ENCODE measurements at regions of chr6 and their contacts with region 1.

Region 1: DNA sequence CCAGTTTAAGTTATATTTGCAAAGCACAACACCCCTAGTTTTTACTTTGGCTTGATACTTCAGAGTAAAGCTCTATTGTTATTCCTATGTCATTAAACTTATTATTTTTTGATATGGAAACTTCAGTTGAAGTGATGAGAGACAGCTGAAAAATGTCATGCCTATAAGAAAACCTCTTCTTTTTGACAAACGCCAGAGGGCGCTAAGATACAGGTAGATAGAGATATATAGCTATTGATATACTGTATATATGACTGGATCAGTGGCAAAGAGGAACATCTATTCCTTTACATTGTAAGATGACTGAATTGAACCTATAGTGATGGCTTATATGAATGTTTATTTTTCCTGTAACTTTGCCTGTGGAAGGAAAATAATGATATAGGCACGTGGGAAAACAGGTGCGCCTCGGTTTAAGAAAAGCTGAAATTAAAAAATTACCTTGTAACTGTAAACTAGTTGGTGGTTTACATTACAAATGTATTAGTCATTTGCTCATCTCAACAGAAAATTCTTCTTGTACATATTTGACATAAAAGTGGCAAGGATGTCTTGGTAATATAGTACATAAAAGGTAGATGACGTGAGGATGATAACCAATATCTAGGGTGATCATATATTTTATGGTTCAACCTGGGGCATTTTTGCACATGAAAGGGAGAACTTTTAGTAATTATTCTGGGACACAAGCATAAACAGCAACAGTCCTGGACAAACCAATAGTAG is 74.1 kb downstream of the LAMA4 start:
- DNase-seq: peak; percentile 26 to 79
- H3K4me3 ChIP-seq: no peak overlapping the region
- H3K27ac ChIP-seq: peak overlapping the region; percentile 26
- H3K4me1 ChIP-seq: peaks cover 14% of the 10 kb centered on the region
- H3K27me3 ChIP-seq: no peaks in the 10 kb centered on the region
- CTCF ChIP-seq: peak; percentile 99

Region 2: GRCh38 chr6:112282221-112282620 is 102.0 kb after region 1 on chr6:
- CTCF ChIA-PET with region 1: interaction called, 10 read pairs
- POLR2A ChIA-PET with region 1: no interaction called
- intact Hi-C with region 1: no loop called
- DNase-seq: peak; percentile 39 to 87
- H3K4me3 ChIP-seq: no peak overlapping the region
- H3K27ac ChIP-seq: peak overlapping the region; percentile 57
- H3K4me1 ChIP-seq: peaks cover 44% of the 10 kb centered on the region
- H3K27me3 ChIP-seq: no peaks in the 10 kb centered on the region
- CTCF ChIP-seq: peak; percentile 47; the same call in 1 of the 2 replicates

Region 3: DNA sequence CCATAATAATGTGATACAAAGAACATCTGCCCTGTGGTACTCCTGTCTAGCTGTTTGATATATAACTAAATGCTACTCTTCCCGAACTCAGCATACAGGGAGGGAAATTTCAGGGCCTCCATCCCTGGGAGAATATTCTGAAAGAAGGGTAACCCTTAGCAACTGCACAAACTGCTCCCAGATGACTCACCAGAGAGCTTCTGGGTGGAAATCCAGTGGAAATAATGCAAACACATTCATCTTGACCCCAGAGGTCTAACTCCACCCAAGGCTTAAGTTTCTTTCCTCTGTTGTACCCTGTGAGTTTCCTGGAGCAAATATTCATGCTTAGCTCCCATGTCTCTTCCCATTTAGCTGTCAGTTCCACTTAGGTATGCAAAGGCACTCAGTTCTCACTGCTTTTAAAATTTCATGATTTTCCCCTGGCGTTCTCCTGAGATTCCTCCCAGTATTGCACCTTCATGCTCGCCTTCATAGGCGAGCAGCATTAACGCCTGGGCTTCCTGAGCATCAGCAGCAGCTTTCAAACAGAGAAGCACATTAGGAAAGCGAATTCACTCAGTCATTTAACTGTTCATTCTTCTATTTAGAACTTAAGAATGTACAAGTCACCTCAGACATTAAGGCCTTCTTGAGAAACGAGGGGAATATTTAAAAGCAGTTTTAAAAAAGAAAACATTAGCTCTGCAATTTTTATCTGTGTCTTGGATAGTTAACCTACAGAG is 117.9 kb after region 1 on chr6:
- CTCF ChIA-PET with region 1: interaction called, 5 read pairs
- POLR2A ChIA-PET with region 1: interaction called, 4 read pairs
- intact Hi-C with region 1: loop called (anchors 1 kb)
- DNase-seq: peak; percentile 48 to 98
- H3K4me3 ChIP-seq: peak overlapping the region; percentile 58
- H3K27ac ChIP-seq: peak overlapping the region; percentile 99
- H3K4me1 ChIP-seq: peaks cover 68% of the 10 kb centered on the region
- H3K27me3 ChIP-seq: no peaks in the 10 kb centered on the region
- CTCF ChIP-seq: peak; percentile 49

Region 4: DNA sequence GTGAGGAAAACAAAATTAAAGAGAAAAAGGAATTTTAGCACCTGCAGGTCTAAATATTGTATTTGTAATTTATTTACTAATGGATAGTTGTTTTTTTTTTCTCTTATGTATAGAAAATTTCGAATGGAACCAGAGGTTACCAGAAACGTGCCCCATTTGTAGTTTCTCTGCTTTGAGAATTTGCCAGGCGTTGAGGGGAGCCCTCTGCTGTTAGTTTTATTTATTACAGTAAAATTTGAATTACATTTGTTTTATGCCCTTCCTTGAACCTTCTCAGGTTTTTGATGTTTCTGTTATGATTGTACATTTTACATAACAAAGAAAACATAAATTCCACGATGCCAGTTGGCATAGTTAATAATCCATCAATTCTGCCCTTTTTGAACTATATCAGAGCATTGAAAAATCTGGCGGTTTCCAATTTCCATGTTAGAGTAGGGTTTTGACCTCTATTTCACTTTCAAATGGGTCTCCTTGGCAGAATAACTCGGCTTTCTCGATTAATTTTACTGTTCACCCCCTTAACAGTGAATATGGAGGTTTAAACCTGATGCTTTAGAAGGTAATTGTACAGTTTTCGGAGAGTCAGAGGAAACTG is 131.8 kb after region 1 on chr6:
- CTCF ChIA-PET with region 1: interaction called, 15 read pairs
- POLR2A ChIA-PET with region 1: no interaction called
- intact Hi-C with region 1: loop called (anchors 1 kb)
- DNase-seq: peak in 1 of 2 experiments; percentile 54
- H3K4me3 ChIP-seq: no peak overlapping the region
- H3K27ac ChIP-seq: peak overlapping the region; percentile 9; the same call in 1 of the 2 replicates
- H3K4me1 ChIP-seq: peaks cover 22% of the 10 kb centered on the region
- H3K27me3 ChIP-seq: no peaks in the 10 kb centered on the region
- CTCF ChIP-seq: peak; percentile 94

Region 5: GRCh38 chr6:112372226-112372806 is 192.1 kb after region 1 on chr6:
- CTCF ChIA-PET with region 1: interaction called, 3 read pairs
- POLR2A ChIA-PET with region 1: no interaction called
- intact Hi-C with region 1: loop called (anchors 1 kb)
- DNase-seq: peak in 1 of 2 experiments; percentile 51
- H3K4me3 ChIP-seq: no peak overlapping the region
- H3K27ac ChIP-seq: no peak overlapping the region
- H3K4me1 ChIP-seq: no peaks in the 10 kb centered on the region
- H3K27me3 ChIP-seq: no peaks in the 10 kb centered on the region
- CTCF ChIP-seq: peak; percentile 90

Region 6: GRCh38 chr6:113672491-113673149 is 1492.4 kb after region 1 on chr6:
- CTCF ChIA-PET with region 1: no interaction called
- POLR2A ChIA-PET with region 1: no interaction called
- intact Hi-C with region 1: no loop called
- DNase-seq: peak in 1 of 2 experiments; percentile 36
- H3K4me3 ChIP-seq: no peak overlapping the region
- H3K27ac ChIP-seq: no peak overlapping the region
- H3K4me1 ChIP-seq: peaks cover 14% of the 10 kb centered on the region; the same call in 1 of the 2 replicates
- H3K27me3 ChIP-seq: no peaks in the 10 kb centered on the region
- CTCF ChIP-seq: no peak

Region 7: DNA sequence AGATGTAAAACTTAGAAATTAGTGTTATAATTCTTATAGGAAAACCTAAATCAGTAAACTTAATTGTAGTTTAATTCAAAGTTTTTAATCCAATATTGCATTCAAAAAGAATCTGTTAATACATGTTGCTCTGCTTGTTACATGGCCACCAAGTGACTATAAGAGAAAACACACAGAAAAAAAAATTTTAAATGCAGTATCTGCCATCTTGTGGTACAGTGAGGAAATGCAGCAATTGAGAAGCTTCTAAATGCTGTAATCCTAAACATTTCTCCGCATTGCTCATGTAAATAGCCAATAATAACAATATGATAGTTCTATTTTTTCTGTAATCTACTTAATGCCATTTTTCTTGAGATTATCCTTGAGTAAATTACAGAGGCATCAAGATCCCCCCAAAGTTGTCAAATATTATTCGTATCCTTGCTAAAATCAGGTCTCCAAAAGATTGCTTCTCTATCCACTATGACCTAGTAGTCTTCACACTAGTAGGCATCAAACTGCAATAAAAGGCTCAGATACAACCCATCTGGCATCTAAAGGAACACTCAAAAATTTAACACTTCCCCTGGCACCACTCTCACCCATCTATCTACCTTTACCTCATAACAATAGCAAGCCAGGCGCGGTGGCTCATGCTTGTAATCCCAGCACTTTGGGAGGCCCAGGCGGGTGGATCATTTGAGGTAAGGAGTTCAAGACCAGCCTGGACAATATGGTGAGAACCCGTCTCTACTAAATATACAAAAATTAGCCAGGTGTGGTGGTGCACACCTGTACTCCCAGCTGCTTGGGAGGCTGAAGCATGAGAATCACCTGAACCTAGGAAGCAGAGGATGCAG is 1756.1 kb after region 1 on chr6:
- CTCF ChIA-PET with region 1: no interaction called
- POLR2A ChIA-PET with region 1: no interaction called
- intact Hi-C with region 1: loop called (anchors 10 kb)
- DNase-seq: peak; percentile 7 to 69
- H3K4me3 ChIP-seq: no peak overlapping the region
- H3K27ac ChIP-seq: no peak overlapping the region
- H3K4me1 ChIP-seq: no peaks in the 10 kb centered on the region
- H3K27me3 ChIP-seq: no peaks in the 10 kb centered on the region
- CTCF ChIP-seq: peak; percentile 99